Vagina (tissue), 2 donors: ENCODE measurements at regions of chr7 and their contacts with region 1.

Region 1: GRCh38 chr7:148962823-148963582 is 65.3 kb downstream of the PDIA4 start:
- DNase-seq: no peak
- H3K4me3 ChIP-seq: peak overlapping the region; percentile 53 to 54
- H3K27ac ChIP-seq: peak overlapping the region; percentile 63
- H3K4me1 ChIP-seq: peaks cover 8% of the 10 kb centered on the region
- H3K27me3 ChIP-seq: no peaks in the 10 kb centered on the region
- CTCF ChIP-seq: peak; percentile 35 to 79 (median 39)
- POLR2A ChIP-seq: no peak

Region 2: GRCh38 chr7:148503875-148504487 is 459.0 kb before region 1 on chr7:
- intact Hi-C with region 1: loop called (anchors 10 kb)
- DNase-seq: no peak
- H3K4me3 ChIP-seq: no peak overlapping the region
- H3K27ac ChIP-seq: no peak overlapping the region
- H3K4me1 ChIP-seq: no peaks in the 10 kb centered on the region
- H3K27me3 ChIP-seq: no peaks in the 10 kb centered on the region
- CTCF ChIP-seq: peak; percentile 47 to 64 (median 61)
- POLR2A ChIP-seq: no peak

Region 3: GRCh38 chr7:148575640-148576411 is 387.2 kb before region 1 on chr7:
- intact Hi-C with region 1: loop called (anchors 10 kb)
- DNase-seq: no peak
- H3K4me3 ChIP-seq: no peak overlapping the region
- H3K27ac ChIP-seq: no peak overlapping the region
- H3K4me1 ChIP-seq: no peaks in the 10 kb centered on the region
- H3K27me3 ChIP-seq: no peaks in the 10 kb centered on the region
- CTCF ChIP-seq: peak; percentile 15 to 58 (median 57)
- POLR2A ChIP-seq: no peak

Region 4: GRCh38 chr7:148884299-148885022 is 78.5 kb before region 1 on chr7:
- intact Hi-C with region 1: loop called (anchors 10 kb)
- DNase-seq: peak in 1 of 2 donors; percentile 93
- H3K4me3 ChIP-seq: peak overlapping the region; percentile 93 to 99
- H3K27ac ChIP-seq: peak overlapping the region; percentile 84
- H3K4me1 ChIP-seq: peaks cover 18% of the 10 kb centered on the region
- H3K27me3 ChIP-seq: no peaks in the 10 kb centered on the region
- CTCF ChIP-seq: no peak
- POLR2A ChIP-seq: peak in 1 of 2 donors; percentile 66